ENCODE measurements at regions of chr12 and their contacts with region 1.

Region 1: GRCh38 chr12:57904848-57905811 is 36.2 kb upstream of the ATP23 start:
- DNase-seq: peak; percentile 92
- H3K4me3 ChIP-seq: no peak overlapping the region
- H3K27ac ChIP-seq: no peak overlapping the region
- H3K4me1 ChIP-seq: peaks cover 2% of the 10 kb centered on the region
- H3K27me3 ChIP-seq: peaks cover 12 to 14% of the 10 kb centered on the region in 2 experiments
- CTCF ChIP-seq: peak; percentile 100
- POLR2A ChIP-seq: no peak

Region 2: DNA sequence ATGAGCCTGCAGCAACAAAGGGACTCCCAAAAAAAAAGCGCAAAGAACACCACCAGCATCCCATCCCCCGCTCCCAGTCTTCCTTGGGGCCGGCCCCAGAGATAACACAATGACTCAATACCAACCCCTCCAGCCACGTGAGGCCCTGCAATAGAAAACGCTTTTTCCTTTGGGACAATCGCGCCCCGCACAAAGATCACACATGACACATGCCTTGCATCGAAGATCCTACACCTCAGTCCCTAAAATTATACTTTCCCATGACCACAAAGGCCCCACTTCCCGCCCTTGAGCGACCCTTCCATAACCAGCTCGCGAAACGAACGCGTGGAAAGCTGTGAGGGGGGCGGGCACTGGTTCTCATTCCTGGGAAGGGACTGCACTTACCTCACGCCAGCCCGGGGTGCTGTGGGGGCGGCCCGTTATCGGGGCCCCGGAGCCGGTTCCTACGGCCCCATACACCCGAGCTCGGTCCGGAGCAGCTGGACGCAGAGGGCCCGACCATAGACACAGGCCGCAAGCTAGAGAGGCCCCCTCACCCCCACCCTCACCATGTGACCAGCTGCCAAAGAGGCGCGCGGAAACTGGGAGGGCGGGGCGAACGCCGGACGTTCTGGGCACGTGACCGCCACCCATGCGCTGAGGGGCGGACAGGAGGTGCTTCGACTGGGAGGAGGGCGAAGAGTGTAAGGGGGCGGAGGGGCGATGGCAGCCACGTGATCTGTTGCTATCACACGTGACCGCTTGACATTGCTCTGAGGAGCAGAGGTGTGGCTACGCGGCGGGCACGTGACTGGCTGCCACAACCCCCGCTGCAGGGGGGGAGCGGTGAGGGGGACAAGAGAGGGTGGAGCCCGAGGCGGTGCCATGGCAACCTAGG is 153.1 kb before region 1 on chr12 and contains the start of gene CDK4:
- CTCF ChIA-PET with region 1: interaction called, 3 read pairs
- POLR2A ChIA-PET with region 1: no interaction called
- dilution Hi-C with region 1: no loop called
- intact Hi-C with region 1: loop called (anchors 1 kb)
- DNase-seq: peak; percentile 100
- H3K4me3 ChIP-seq: peak within 1 kb of the TSS; percentile 19 to 78 (median 61)
- H3K27ac ChIP-seq: peak within 1 kb of the TSS; percentile 68
- H3K4me1 ChIP-seq: peaks cover 17% of the 10 kb centered on the region
- H3K27me3 ChIP-seq: peaks cover 22 to 28% of the 10 kb centered on the region in 2 experiments
- CTCF ChIP-seq: no peak
- POLR2A ChIP-seq: peak; percentile 84
- total RNA-seq, gene CDK4: 156 and 171 TPM in 2 replicates

Region 3: DNA sequence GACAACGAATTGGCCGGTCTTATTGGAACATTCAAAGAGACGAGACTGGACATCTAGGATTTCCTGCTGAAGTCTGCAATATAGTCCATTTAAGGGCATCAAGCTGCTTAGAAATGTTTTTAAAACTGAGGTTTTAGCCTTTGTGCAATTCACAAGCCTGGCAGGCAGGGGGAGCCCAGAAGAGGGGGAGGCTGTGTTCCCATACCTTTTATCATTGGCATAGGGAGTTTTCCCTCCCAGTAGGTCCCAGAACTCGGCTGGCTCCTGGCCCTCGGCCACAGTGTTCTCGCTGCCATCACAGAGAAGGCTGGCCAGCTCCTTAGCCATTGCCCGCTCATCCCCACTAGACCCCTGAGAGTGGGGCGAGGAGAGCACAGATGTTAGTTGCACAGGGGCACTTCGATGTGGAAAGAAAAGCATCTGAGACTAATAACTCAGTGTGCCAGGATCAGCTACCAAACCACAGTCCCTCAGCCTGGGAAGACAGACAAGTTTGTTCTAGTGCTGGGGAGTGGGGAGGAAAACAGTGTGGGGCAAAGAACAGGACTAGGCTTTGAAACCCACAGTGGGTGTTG is 101.7 kb before region 1 on chr12:
- CTCF ChIA-PET with region 1: interaction called, 44 read pairs
- POLR2A ChIA-PET with region 1: no interaction called
- dilution Hi-C with region 1: no loop called
- intact Hi-C with region 1: loop called (anchors 1 kb)
- DNase-seq: peak; percentile 60
- H3K4me3 ChIP-seq: no peak overlapping the region
- H3K27ac ChIP-seq: no peak overlapping the region
- H3K4me1 ChIP-seq: no peaks in the 10 kb centered on the region
- H3K27me3 ChIP-seq: no peaks in the 10 kb centered on the region
- CTCF ChIP-seq: peak; percentile 81 to 83
- POLR2A ChIP-seq: no peak

Region 4: DNA sequence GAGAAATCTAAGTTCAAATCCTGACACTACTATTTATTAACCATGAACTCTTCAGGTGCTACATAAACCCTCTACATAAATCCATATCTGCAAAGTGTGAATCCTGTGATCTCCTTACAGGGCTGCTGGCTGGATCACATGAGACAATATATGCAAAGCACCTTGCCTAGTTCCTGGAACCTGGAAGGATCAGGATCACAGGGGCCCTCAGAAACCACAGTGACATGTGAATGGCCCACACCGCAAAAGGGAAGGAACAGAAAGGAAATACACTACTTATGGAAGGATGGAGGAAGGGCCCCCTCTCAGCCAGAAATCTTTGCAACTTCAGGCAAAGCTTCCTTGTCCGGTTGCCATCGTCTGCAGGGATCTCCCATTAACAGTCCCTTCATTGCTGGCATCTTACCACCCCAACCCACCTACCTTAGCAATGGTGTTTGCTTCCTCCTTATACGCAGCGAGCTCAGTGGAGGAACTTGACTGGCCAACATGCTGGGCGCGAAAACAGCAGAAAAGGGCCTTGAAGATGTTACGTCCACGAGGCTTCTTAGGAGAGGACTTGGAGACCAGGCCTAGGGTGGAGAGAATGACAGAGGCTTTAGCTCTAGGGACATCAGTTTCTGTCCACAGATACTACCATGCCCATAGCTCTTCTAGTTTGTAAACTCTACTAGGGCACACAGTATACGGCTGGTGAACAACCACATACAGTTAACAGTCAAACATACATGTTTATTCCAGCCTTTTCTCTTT is 75.9 kb before region 1 on chr12:
- CTCF ChIA-PET with region 1: interaction called, 22 read pairs
- POLR2A ChIA-PET with region 1: no interaction called
- dilution Hi-C with region 1: no loop called
- intact Hi-C with region 1: loop called (anchors 1 kb)
- DNase-seq: no peak
- H3K4me3 ChIP-seq: no peak overlapping the region
- H3K27ac ChIP-seq: no peak overlapping the region
- H3K4me1 ChIP-seq: peaks cover 12% of the 10 kb centered on the region
- H3K27me3 ChIP-seq: no peaks in the 10 kb centered on the region
- CTCF ChIP-seq: no peak
- POLR2A ChIP-seq: no peak

Measured in endothelial cell of umbilical vein (primary cell).